Activated CD4-positive, alpha-beta memory T cell treated with anti-CD3 and anti-CD28 coated beads, Interleukin-2, amount 10 ng/mL, durations not matched to agents 7 days and 5 days (primary cell): ENCODE measurements at regions of chr4 and their contacts with region 1.

Region 1: GRCh38 chr4:122131562-122132157 is 20.5 kb upstream of the BLTP1 start:
- DNase-seq: peak; percentile 17
- H3K4me3 Mint-ChIP-seq: no peak overlapping the region
- H3K27ac Mint-ChIP-seq: peak overlapping the region; percentile 79
- H3K4me1 Mint-ChIP-seq: peaks cover 42% of the 10 kb centered on the region
- H3K27me3 Mint-ChIP-seq: no peaks in the 10 kb centered on the region

Region 2: GRCh38 chr4:121923306-121923705 is 208.4 kb before region 1 on chr4:
- CTCF ChIA-PET with region 1: no interaction called
- POLR2A ChIA-PET with region 1: no interaction called
- DNase-seq: no peak
- H3K4me3 Mint-ChIP-seq: no peak overlapping the region
- H3K27ac Mint-ChIP-seq: no peak overlapping the region
- H3K4me1 Mint-ChIP-seq: no peaks in the 10 kb centered on the region
- H3K27me3 Mint-ChIP-seq: no peaks in the 10 kb centered on the region

Region 3: DNA sequence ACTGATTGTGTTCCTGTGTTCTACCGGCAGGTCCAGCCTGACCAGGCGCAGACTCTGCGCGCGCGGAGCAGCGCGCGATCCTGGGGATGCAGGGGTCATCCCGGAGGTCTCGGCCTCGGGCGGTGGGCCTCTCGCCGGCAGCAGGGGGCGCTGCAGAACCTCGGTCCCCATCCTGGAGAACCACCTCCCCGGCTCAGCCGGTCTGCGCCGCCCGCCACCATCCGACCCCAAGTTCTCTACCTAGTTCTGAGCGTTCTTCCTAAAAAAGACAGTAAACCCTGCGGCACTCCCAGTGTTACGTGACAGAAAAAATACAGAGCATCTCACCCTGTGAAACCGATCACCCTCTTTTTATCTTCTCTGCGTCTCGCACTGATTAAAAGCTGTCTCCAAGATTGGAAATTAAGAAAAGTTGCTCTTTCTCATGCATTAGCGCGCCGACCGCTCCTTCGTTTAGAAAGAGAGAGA is 181.4 kb before region 1 on chr4:
- CTCF ChIA-PET with region 1: no interaction called
- POLR2A ChIA-PET with region 1: no interaction called
- DNase-seq: peak; percentile 85
- H3K4me3 Mint-ChIP-seq: peak overlapping the region; percentile 82
- H3K27ac Mint-ChIP-seq: no peak overlapping the region
- H3K4me1 Mint-ChIP-seq: peaks cover 15% of the 10 kb centered on the region
- H3K27me3 Mint-ChIP-seq: peaks cover 48% of the 10 kb centered on the region

Region 4: DNA sequence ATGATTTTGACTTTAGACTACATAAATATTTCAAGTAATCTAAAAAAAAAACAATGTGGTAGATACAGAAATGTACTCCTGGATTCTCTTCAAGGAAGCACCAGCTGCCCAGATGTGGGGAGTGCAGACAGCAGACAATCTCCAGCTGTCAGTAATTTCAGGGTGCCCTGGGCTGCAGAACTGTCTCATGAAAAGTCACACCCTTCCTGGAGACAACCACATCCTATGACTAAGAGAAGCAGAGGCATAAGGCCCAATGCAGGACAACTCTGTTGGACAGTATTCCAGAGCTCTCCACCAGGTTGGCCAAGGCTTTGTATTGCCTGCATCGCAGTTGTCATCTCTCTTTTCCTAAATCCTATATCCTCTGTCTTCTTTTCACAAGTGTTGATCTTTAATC is 13.9 kb before region 1 on chr4:
- CTCF ChIA-PET with region 1: interaction called, 8 read pairs
- POLR2A ChIA-PET with region 1: interaction called, 19 read pairs
- DNase-seq: peak; percentile 51
- H3K4me3 Mint-ChIP-seq: no peak overlapping the region
- H3K27ac Mint-ChIP-seq: peak overlapping the region; percentile 57
- H3K4me1 Mint-ChIP-seq: peaks cover 25% of the 10 kb centered on the region
- H3K27me3 Mint-ChIP-seq: no peaks in the 10 kb centered on the region

Region 5: DNA sequence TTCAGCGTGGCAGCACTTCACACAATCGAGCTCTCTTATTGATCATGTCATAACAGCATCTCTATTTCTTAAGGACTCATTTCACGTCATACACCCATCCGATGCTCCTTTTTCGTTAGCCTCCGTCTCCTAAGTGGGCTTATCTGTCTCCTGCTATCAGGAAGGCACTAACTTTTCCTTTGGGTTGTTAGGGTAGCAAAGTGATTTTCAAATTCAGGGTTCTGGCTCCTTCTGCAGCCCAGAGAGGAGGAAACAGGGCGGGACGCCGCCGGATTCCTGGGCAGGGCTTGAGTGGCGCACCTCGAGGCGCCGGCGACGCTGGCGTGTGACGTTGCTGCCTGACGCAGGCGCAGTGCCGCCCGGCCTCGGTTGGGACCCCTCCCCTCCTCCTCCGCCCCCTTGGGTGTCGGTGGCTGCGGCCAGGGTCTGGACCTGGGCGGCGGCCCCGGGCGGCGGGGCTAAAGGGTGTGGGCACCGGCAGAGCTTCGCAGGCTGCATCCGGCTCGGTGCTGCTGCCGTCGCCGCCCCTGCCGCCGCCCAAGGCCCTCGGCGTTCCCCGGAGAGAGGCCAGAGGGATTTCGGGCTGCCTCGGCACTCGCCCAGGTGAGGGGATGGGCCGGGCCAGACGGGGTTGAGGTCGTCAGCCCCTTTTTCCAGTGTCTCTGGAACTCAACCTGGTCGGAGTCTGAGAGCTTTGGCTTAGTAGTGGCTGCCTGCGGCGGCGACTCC is 20.5 kb after region 1 on chr4 and contains the start of gene BLTP1:
- CTCF ChIA-PET with region 1: interaction called, 3 read pairs
- POLR2A ChIA-PET with region 1: interaction called, 14 read pairs
- DNase-seq: peak; percentile 89
- H3K4me3 Mint-ChIP-seq: peak within 1 kb of the TSS; percentile 80
- H3K27ac Mint-ChIP-seq: peak within 1 kb of the TSS; percentile 85
- H3K4me1 Mint-ChIP-seq: peaks cover 53% of the 10 kb centered on the region
- H3K27me3 Mint-ChIP-seq: no peaks in the 10 kb centered on the region
- total RNA-seq, gene BLTP1: 39.2 to 45.3 TPM

Region 6: DNA sequence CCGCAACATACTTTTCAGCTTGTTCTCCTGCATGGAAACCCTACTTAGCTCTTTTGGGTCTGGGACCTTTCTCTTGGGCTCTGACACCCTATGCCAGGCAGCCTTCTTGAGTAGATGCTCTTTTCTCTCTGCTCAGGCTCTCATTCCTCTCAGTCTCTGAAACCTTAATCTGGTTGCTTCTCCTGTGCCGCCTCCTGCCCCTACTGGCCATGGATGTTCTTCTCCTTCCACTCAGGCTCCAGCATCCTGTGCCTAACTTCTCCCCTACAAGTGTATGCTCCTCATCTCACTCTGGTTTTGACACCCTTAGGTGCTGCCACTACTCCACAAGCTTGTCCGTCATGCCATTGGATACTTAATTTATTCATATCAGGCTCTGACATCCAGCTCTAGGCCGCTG is 35.7 kb after region 1 on chr4:
- CTCF ChIA-PET with region 1: no interaction called
- POLR2A ChIA-PET with region 1: no interaction called
- DNase-seq: no peak
- H3K4me3 Mint-ChIP-seq: no peak overlapping the region
- H3K27ac Mint-ChIP-seq: no peak overlapping the region
- H3K4me1 Mint-ChIP-seq: peaks cover 4% of the 10 kb centered on the region
- H3K27me3 Mint-ChIP-seq: no peaks in the 10 kb centered on the region

Region 7: DNA sequence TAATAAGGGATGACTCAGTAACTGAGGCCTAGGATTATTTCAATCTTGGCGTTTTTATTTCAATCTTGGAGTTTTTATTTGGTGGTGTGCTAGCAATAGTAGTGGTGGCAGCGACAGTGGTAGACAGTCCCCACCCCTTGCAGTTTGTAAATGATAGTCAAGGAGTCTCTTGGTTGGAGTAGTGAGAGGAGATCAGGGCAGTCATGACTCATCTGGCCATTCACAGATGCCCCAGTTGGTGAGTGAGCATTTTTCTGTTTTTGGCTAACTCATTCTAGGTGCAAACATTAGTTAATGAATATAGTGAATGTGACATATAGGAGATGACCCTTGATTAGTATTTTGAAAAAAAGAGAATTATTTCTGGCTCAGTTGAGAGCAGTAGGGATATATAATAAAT is 153.6 kb after region 1 on chr4:
- CTCF ChIA-PET with region 1: no interaction called
- POLR2A ChIA-PET with region 1: no interaction called
- DNase-seq: no peak
- H3K4me3 Mint-ChIP-seq: no peak overlapping the region
- H3K27ac Mint-ChIP-seq: no peak overlapping the region
- H3K4me1 Mint-ChIP-seq: no peaks in the 10 kb centered on the region
- H3K27me3 Mint-ChIP-seq: no peaks in the 10 kb centered on the region